Heart left ventricle (tissue), 16 donors: ENCODE measurements at regions of chr3 and their contacts with region 1.

Region 1: DNA sequence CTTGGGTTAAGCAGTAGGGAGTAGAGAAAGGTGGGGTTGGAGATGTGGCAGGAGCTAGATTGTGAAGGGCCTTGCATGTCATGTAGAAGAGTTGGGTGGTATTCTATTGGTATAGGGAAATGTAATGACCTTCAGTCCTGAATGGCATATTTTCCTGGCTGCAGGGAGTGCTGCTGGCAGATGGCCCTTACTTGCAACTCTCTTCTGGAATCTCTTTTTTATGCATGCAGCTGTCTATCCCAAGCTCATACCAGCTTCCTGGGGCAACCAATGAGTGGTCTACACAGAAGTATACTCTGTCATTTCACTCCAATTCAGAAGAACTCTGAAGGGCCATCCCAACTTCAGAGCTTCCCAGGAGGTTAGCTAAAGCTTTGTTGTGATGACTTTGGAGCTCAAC is 144.7 kb upstream of the ANKRD28 start:
- DNase-seq: no peak
- ATAC-seq: peak in 1 of 4 donors; percentile 45
- H3K4me3 ChIP-seq: no peak overlapping the region
- H3K27ac ChIP-seq: no peak overlapping the region
- H3K4me1 ChIP-seq: peaks cover 0 to 3% (median 0%) of the 10 kb centered on the region in 12 donors
- H3K27me3 ChIP-seq: no peaks in the 10 kb centered on the region
- CTCF ChIP-seq: no peak
- POLR2A ChIP-seq: no peak

Region 2: GRCh38 chr3:16026753-16027152 is 84.3 kb after region 1 on chr3:
- intact Hi-C with region 1: loop called in 1 of 10 experiments (anchors 2 kb)
- DNase-seq: no peak
- ATAC-seq: no peak
- H3K4me3 ChIP-seq: no peak overlapping the region
- H3K27ac ChIP-seq: no peak overlapping the region
- H3K4me1 ChIP-seq: no peaks in the 10 kb centered on the region
- H3K27me3 ChIP-seq: no peaks in the 10 kb centered on the region
- CTCF ChIP-seq: no peak
- POLR2A ChIP-seq: no peak